Caco-2 (cell line): ENCODE measurements at regions of chr10 and their contacts with region 1.

Region 1: GRCh38 chr10:28875549-28876081 is 198.3 kb downstream of the BAMBI start:
- DNase-seq: no peak
- H3K4me3 ChIP-seq: no peak overlapping the region
- H3K4me3 Mint-ChIP-seq: no peak overlapping the region
- H3K27ac Mint-ChIP-seq: no peak overlapping the region
- H3K4me1 ChIP-seq: peaks cover 16% of the 10 kb centered on the region
- H3K4me1 Mint-ChIP-seq: peaks cover 7% of the 10 kb centered on the region
- H3K27me3 ChIP-seq: no peaks in the 10 kb centered on the region
- H3K27me3 Mint-ChIP-seq: no peaks in the 10 kb centered on the region
- CTCF ChIP-seq: no peak

Region 2: DNA sequence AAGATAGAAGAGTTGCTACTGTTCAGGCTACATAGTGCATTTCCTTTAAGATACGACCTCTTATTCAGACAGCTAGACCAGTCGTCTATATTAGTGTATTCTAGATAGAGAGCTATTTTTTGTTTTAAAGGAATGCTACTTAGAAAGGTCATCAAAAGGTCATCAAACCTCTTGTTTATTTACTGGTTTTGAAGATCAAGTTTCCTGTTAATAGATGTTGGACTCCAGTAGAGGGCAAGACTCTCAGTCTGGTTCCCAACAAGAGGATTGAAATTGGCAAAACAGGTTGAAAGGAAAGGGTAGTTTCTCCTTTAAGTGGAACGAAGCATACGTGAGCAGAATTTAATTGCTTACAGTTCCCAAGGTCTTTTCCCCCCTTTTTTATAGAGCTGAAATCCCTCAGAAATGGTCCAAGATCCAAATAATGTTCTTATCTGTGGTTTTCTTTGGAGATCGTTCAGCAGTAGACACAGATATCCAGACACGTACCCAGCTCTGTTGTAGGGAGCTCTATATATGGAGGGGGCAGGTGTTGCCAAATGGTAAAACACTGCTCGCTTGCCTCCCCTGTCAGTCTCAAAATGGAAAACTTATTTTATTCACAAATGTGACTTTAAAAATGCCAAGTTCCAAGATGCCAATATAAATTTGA is 161.1 kb before region 1 on chr10:
- CTCF ChIA-PET with region 1: interaction called, 3 read pairs
- POLR2A ChIA-PET with region 1: interaction called, 29 read pairs
- intact Hi-C with region 1: no loop called
- DNase-seq: no peak
- H3K4me3 ChIP-seq: no peak overlapping the region
- H3K4me3 Mint-ChIP-seq: no peak overlapping the region
- H3K27ac Mint-ChIP-seq: no peak overlapping the region
- H3K4me1 ChIP-seq: peaks cover 3% of the 10 kb centered on the region; the same call in 1 of the 2 replicates
- H3K4me1 Mint-ChIP-seq: peaks cover 17% of the 10 kb centered on the region
- H3K27me3 ChIP-seq: no peaks in the 10 kb centered on the region
- H3K27me3 Mint-ChIP-seq: no peaks in the 10 kb centered on the region
- CTCF ChIP-seq: peak in 1 of 2 experiments; percentile 9

Region 3: DNA sequence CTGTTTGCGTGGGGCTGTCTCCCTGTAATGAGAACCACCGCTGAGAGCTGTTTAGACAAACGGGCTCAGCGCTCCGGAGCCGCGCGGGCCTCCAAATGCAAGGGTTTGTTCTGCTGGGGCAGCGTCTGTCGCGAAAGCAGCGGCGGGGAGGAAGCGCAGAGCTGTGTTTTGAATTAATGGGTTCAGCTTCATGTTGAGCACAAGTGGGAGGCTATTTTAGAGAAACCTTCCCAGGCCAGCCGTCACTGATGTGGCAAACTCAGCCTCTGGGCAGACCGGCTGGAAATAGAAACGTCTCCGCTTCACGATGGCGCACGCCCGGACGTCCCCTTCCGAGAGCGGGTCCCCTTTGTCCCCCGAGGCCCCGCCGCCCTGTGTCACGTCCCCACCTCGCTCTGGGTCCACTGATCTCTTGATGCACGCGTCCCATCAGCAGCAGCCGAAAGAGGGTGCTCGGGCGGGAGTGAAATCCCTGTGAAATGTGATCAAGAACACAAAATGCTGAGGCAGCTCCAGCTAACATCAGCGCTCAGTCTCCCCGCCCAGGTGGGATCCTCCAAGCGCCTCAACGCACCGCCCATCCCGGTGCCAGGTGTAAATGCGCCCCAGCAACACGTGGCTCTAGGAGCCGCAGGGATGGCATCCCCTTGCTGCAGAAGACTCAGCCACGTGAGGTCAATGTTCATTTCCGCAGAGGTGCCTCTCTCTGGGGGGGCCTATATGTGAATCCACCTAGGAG is 153.4 kb before region 1 on chr10:
- CTCF ChIA-PET with region 1: no interaction called
- POLR2A ChIA-PET with region 1: interaction called, 29 read pairs
- intact Hi-C with region 1: loop called (anchors 5 kb)
- DNase-seq: peak; percentile 66 to 72
- H3K4me3 ChIP-seq: peak overlapping the region; percentile 68
- H3K4me3 Mint-ChIP-seq: peak overlapping the region; percentile 91
- H3K27ac Mint-ChIP-seq: peak overlapping the region; percentile 75
- H3K4me1 ChIP-seq: peaks cover 23% of the 10 kb centered on the region
- H3K4me1 Mint-ChIP-seq: peaks cover 8% of the 10 kb centered on the region
- H3K27me3 ChIP-seq: no peaks in the 10 kb centered on the region
- H3K27me3 Mint-ChIP-seq: no peaks in the 10 kb centered on the region
- CTCF ChIP-seq: peak in 1 of 2 experiments; percentile 32

Region 4: DNA sequence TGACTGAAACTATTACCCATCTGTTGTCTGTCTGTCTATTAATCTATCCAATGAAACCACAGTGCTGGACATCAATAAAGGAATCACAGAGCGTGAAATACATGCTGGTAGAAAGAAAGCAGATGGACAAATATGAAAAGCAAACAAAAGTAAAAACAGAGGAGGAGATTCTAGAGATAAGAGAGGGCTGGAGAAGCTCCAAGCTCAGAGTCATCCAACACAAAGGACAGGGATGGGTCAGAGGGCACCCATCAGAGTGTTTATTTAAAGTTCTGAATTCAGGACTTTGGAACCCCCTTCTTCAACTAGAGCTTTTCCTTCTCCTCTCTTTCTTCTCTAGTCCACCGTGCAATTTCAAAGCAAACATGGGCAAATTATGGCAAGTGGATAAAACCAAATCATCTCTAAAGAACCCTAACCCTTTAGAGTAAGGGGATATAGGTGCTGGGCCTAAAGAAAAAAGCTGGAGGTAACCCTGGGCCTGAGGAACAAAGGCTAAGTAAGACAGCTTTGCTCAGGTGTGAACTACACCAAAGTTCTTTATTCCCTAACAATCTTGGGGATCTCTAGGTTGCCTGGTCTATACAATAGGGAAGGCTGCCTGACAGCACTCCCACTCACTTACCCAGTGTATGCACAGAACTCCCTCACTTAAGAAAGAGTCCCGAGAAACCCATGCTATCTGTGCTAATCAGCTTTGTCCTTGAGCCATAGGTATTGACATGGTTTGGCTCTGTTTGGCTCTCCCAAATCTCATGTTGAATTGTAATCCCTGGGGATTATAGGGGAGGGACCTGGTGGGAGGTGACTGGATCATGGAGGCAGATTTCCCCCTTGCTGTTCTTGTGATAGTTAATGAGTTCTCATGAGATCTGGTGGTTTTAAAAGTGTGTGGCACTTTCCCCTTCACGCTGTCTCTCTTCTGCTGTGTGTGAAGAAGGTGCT is 101.3 kb before region 1 on chr10:
- CTCF ChIA-PET with region 1: no interaction called
- POLR2A ChIA-PET with region 1: no interaction called
- intact Hi-C with region 1: loop called (anchors 10 kb)
- DNase-seq: peak; percentile 63 to 70
- H3K4me3 ChIP-seq: no peak overlapping the region
- H3K4me3 Mint-ChIP-seq: peak overlapping the region; percentile 47
- H3K27ac Mint-ChIP-seq: peak overlapping the region; percentile 74
- H3K4me1 ChIP-seq: peaks cover 36% of the 10 kb centered on the region
- H3K4me1 Mint-ChIP-seq: peaks cover 31% of the 10 kb centered on the region
- H3K27me3 ChIP-seq: no peaks in the 10 kb centered on the region
- H3K27me3 Mint-ChIP-seq: no peaks in the 10 kb centered on the region
- CTCF ChIP-seq: no peak

Region 5: GRCh38 chr10:28984431-28984830 is 108.8 kb after region 1 on chr10:
- CTCF ChIA-PET with region 1: no interaction called
- POLR2A ChIA-PET with region 1: no interaction called
- intact Hi-C with region 1: no loop called
- DNase-seq: peak in 1 of 2 experiments; percentile 36
- H3K4me3 ChIP-seq: no peak overlapping the region
- H3K4me3 Mint-ChIP-seq: no peak overlapping the region
- H3K27ac Mint-ChIP-seq: peak overlapping the region; percentile 3
- H3K4me1 ChIP-seq: peaks cover 10% of the 10 kb centered on the region; the same call in 1 of the 2 replicates
- H3K4me1 Mint-ChIP-seq: peaks cover 11% of the 10 kb centered on the region
- H3K27me3 ChIP-seq: no peaks in the 10 kb centered on the region
- H3K27me3 Mint-ChIP-seq: no peaks in the 10 kb centered on the region
- CTCF ChIP-seq: no peak

Region 6: GRCh38 chr10:29131952-29132820 is 256.6 kb after region 1 on chr10:
- CTCF ChIA-PET with region 1: no interaction called
- POLR2A ChIA-PET with region 1: no interaction called
- intact Hi-C with region 1: loop called (anchors 5 kb)
- DNase-seq: no peak
- H3K4me3 ChIP-seq: no peak overlapping the region
- H3K4me3 Mint-ChIP-seq: no peak overlapping the region
- H3K27ac Mint-ChIP-seq: peak overlapping the region; percentile 51
- H3K4me1 ChIP-seq: peaks cover 33% of the 10 kb centered on the region
- H3K4me1 Mint-ChIP-seq: peaks cover 15% of the 10 kb centered on the region
- H3K27me3 ChIP-seq: no peaks in the 10 kb centered on the region
- H3K27me3 Mint-ChIP-seq: no peaks in the 10 kb centered on the region
- CTCF ChIP-seq: no peak